ENCODE measurements at regions of chr10 and their contacts with region 1.

Region 1: GRCh38 chr10:102420810-102421644 is at the start of gene FBXL15:
- DNase-seq: peak; percentile 85 to 89
- H3K4me3 ChIP-seq: peak within 1 kb of the TSS; percentile 94
- H3K27ac ChIP-seq: peak within 1 kb of the TSS; percentile 57
- H3K4me1 ChIP-seq: peaks cover 5% of the 10 kb centered on the region; the same call in 1 of the 2 replicates
- H3K27me3 ChIP-seq: 0 out of 2 replicates have a peak, but pooled peaks cover 3% of the 10 kb centered on the region
- CTCF ChIP-seq: no peak
- total RNA-seq, gene FBXL15: 6.2 and 12.7 TPM in 2 replicates

Region 2: GRCh38 chr10:102132563-102133372 is 288.3 kb before region 1 on chr10 and contains the start of gene PPRC1:
- CTCF ChIA-PET with region 1: no interaction called
- POLR2A ChIA-PET with region 1: no interaction called
- intact Hi-C with region 1: loop called (anchors 2 kb)
- DNase-seq: peak; percentile 91 to 92
- H3K4me3 ChIP-seq: peak within 1 kb of the TSS; percentile 87
- H3K27ac ChIP-seq: peak within 1 kb of the TSS; percentile 89
- H3K4me1 ChIP-seq: peaks cover 26% of the 10 kb centered on the region
- H3K27me3 ChIP-seq: no peaks in the 10 kb centered on the region
- CTCF ChIP-seq: peak; percentile 83
- total RNA-seq, gene PPRC1: 22.9 and 25.1 TPM in 2 replicates

Region 3: DNA sequence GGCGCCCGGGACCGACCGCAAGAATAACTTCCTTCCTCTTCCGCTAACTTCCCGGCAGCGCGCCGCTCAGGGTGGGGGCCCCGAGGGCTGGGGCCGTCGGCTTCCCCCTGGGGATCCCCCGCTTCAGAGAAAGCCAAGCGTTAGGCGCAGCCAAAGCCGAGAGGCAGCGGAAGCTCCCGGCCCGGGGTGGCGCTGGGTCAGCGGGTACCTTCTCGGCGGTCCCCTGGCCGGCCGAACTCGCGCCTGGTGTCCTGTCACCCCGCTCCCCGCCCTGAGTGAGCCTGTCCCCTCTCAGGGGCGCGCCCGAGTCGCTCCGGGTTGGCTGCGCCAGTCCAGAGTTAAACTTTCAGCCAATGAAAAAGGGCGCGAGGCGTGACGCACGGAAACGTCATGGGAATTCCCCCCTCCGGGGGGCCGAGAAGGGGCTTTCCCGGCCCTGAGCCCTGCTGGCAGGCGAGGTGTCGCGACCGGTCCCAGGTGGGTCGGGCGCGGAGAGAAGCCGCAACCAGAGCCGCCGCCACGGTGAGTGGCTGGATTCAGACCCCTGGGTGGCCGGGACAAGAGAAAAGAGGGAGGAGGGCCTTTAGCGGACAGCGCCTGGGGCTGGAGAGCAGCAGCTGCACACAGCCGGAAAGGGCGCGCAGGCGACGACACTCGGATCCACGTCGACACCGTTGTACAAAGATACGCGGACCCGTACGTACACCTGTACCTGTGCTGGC is 26.8 kb before region 1 on chr10:
- CTCF ChIA-PET with region 1: interaction called, 14 read pairs
- POLR2A ChIA-PET with region 1: no interaction called
- intact Hi-C with region 1: loop called (anchors 1 kb)
- DNase-seq: peak; percentile 75 to 87
- H3K4me3 ChIP-seq: peak overlapping the region; percentile 77
- H3K27ac ChIP-seq: peak overlapping the region; percentile 40
- H3K4me1 ChIP-seq: 0 out of 2 replicates have a peak, but pooled peaks cover 6% of the 10 kb centered on the region
- H3K27me3 ChIP-seq: no peaks in the 10 kb centered on the region
- CTCF ChIP-seq: peak; percentile 79

Region 4: DNA sequence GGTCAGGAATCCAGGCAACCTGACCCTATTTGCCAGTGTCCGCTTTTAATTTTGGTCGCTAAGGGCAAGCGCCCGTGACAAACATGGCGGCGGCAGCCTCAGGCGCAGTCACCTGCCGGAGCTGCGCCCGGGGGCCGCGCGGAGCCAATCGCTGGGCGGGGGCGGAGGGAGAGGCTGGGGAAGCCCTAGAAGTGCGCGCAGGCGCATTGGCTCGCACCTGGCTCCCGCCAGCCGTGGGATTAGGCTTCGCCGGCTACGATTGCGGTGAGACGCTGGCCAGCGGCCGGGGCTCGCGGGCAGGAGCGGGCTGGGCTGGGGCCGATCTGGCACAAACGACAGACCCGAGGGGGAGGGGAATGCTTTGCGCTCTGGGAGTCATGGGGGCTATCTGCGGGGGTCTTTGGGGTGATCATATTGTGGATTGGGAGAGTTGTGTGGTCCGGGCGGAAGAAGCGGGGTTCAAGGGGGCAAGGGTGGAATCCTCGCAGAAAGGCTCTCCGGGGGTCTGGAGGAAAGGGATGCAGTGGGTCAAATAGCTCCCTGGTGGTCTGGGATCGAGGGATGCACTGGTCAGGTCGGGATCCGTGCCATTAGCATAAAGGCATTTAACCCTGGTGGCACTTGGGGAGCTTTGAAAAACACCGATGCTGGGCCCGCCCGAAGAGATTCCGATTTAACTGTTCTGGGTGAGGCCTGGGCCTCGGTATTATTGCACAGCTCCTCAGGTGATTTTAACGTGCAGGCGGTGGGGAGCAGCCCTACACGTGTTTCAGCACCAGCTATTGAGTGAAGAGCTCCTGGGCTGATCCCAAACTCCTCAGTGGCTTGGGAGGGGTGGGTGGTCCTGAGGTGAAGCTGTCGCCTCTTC is 40.4 kb after region 1 on chr10:
- CTCF ChIA-PET with region 1: no interaction called
- POLR2A ChIA-PET with region 1: interaction called, 5 read pairs
- intact Hi-C with region 1: loop called (anchors 5 kb)
- DNase-seq: peak; percentile 66 to 84
- H3K4me3 ChIP-seq: peak overlapping the region; percentile 64
- H3K27ac ChIP-seq: no peak overlapping the region
- H3K4me1 ChIP-seq: no peaks in the 10 kb centered on the region
- H3K27me3 ChIP-seq: no peaks in the 10 kb centered on the region
- CTCF ChIP-seq: no peak

Region 5: GRCh38 chr10:102583435-102584417 is 162.7 kb after region 1 on chr10:
- CTCF ChIA-PET with region 1: interaction called, 4 read pairs
- POLR2A ChIA-PET with region 1: no interaction called
- intact Hi-C with region 1: loop called (anchors 5 kb)
- DNase-seq: peak; percentile 60 to 66
- H3K4me3 ChIP-seq: no peak overlapping the region
- H3K27ac ChIP-seq: no peak overlapping the region
- H3K4me1 ChIP-seq: no peaks in the 10 kb centered on the region
- H3K27me3 ChIP-seq: no peaks in the 10 kb centered on the region
- CTCF ChIP-seq: peak; percentile 83

Measured in PC-9 (cell line).